ENCODE measurements at regions of chr12 and their contacts with region 1.

Region 1: DNA sequence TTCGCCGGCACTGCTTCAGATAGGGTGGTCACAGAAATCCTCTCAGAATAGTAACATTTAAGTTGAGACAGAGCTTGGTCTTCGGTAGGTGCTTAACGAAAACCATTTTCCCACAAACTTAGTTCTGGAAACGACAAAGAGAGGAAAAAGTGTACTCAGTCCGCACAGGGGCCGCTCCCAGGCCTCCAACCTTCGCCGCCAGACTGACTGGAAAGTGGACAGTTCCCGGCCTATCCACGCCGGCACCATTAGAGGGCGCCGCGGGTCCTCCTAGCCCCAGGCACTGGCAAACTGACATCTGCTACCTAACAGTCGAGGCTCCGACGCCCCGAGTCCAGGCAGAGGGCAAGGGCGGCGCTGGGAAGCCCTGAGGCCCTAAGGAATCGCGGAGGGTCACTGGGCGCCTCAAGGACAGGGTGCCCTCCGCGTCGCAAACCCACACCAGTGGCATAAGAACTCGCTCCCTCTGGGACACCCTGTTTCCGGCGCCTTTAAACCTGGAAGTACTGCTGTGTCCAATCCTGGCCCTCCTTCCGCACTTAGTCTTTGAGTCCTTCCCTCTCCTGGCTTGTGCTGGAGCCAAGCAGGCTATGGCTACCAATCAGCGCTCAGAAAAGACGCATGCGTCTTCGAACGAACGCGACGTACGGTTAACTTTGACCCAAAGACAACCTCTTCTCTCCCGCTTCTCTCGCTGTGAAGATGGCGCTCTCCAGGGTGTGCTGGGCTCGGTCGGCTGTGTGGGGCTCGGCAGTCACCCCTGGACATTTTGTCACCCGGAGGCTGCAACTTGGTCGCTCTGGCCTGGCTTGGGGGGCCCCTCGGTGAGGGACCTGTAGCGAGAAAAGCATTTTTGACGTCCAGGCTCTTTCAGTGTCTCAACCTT is at the start of gene LETMD1:
- DNase-seq: peak; percentile 92 to 98 (median 97)
- H3K4me3 ChIP-seq: peak within 1 kb of the TSS; percentile 50 to 93 (median 82)
- H3K27ac ChIP-seq: peak within 1 kb of the TSS; percentile 80 to 96 (median 93)
- H3K4me1 ChIP-seq: peaks cover 15 to 18% of the 10 kb centered on the region in 2 donors
- H3K27me3 ChIP-seq: no peaks in the 10 kb centered on the region
- CTCF ChIP-seq: peak; percentile 70 to 93 (median 90)
- POLR2A ChIP-seq: peak; percentile 73 to 91
- total RNA-seq, gene LETMD1: 37.7 to 122 (median 82.2) TPM

Region 2: GRCh38 chr12:51087818-51088217 is 39.9 kb after region 1 on chr12:
- intact Hi-C with region 1: loop called in 1 of 2 experiments (anchors 5 kb)
- DNase-seq: no peak
- H3K4me3 ChIP-seq: no peak overlapping the region
- H3K27ac ChIP-seq: no peak overlapping the region
- H3K4me1 ChIP-seq: no peaks in the 10 kb centered on the region
- H3K27me3 ChIP-seq: no peaks in the 10 kb centered on the region
- CTCF ChIP-seq: no peak
- POLR2A ChIP-seq: no peak

Measured in adrenal gland (tissue), 19 donors.